ENCODE measurements at regions of chr10 and their contacts with region 1.

Region 1: GRCh38 chr10:6348096-6348874 is 145.6 kb downstream of the PFKFB3 start:
- DNase-seq: peak; percentile 94
- H3K4me3 Mint-ChIP-seq: peak overlapping the region; percentile 63
- H3K27ac Mint-ChIP-seq: peak overlapping the region; percentile 96
- H3K4me1 Mint-ChIP-seq: peaks cover 58% of the 10 kb centered on the region
- H3K27me3 Mint-ChIP-seq: no peaks in the 10 kb centered on the region

Region 2: GRCh38 chr10:6120691-6121090 is 227.6 kb before region 1 on chr10:
- CTCF ChIA-PET with region 1: no interaction called
- intact Hi-C with region 1: loop called (anchors 1 kb)
- DNase-seq: no peak
- H3K4me3 Mint-ChIP-seq: no peak overlapping the region
- H3K27ac Mint-ChIP-seq: no peak overlapping the region
- H3K4me1 Mint-ChIP-seq: peaks cover 31% of the 10 kb centered on the region
- H3K27me3 Mint-ChIP-seq: peaks cover 3% of the 10 kb centered on the region

Region 3: GRCh38 chr10:6239213-6239991 is 108.9 kb before region 1 on chr10:
- CTCF ChIA-PET with region 1: interaction called, 3 read pairs
- intact Hi-C with region 1: loop called (anchors 1 kb)
- DNase-seq: peak; percentile 90
- H3K4me3 Mint-ChIP-seq: no peak overlapping the region
- H3K27ac Mint-ChIP-seq: peak overlapping the region; percentile 60
- H3K4me1 Mint-ChIP-seq: peaks cover 23% of the 10 kb centered on the region
- H3K27me3 Mint-ChIP-seq: no peaks in the 10 kb centered on the region

Region 4: GRCh38 chr10:6269953-6270867 is 78.1 kb before region 1 on chr10:
- CTCF ChIA-PET with region 1: interaction called, 4 read pairs
- intact Hi-C with region 1: loop called (anchors 1 kb)
- DNase-seq: peak; percentile 90
- H3K4me3 Mint-ChIP-seq: peak overlapping the region; percentile 13
- H3K27ac Mint-ChIP-seq: peak overlapping the region; percentile 93
- H3K4me1 Mint-ChIP-seq: peaks cover 50% of the 10 kb centered on the region
- H3K27me3 Mint-ChIP-seq: no peaks in the 10 kb centered on the region

Region 5: DNA sequence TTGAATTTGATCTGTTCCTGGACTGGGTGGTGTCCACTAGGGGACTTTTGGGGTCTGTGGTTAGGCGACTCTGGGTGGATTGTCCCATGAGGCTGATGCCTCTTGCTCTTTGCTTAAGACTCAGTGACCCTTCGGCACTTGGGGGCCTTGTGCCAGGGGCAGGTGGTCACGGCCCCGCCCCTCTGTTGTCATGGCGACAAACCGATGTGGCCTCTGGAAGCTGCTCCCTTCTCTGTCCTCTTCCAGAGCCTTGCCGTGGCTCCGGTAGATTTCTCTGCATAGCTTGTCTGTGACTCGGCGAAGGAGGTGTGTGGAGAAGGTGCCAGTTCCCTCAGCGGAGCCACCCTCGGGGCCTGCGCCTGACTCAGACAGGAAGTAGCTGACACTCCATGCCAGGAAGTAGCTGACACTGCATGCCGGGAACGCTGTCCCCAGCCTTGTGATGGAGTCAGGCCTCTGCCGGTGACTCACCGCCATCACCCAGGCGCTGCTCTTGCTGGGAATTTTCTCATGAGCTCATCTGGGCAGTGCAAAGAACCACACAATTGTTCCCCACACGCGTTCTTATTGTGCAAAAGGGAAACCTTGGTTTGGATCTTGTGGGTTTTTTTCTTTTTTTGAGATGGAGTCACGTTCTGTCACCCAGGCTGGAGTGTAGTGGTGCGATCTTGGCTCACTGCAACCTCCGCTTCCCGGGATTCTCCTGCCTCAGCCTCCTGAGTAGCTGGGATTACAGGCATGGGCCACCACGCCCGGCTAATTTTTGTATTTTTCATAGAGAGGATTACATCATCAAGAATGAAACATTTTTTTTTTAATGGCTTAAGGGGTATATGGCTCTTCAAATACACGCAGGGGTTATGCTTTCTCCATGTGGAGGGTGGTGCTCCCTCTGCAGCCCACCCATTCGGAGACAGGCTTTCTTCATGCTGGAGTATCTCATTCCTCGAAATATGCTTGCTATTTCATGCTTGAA is 73.0 kb before region 1 on chr10:
- CTCF ChIA-PET with region 1: interaction called, 4 read pairs
- intact Hi-C with region 1: loop called (anchors 1 kb)
- DNase-seq: peak; percentile 98
- H3K4me3 Mint-ChIP-seq: peak overlapping the region; percentile 60
- H3K27ac Mint-ChIP-seq: peak overlapping the region; percentile 94
- H3K4me1 Mint-ChIP-seq: peaks cover 50% of the 10 kb centered on the region
- H3K27me3 Mint-ChIP-seq: no peaks in the 10 kb centered on the region

Region 6: DNA sequence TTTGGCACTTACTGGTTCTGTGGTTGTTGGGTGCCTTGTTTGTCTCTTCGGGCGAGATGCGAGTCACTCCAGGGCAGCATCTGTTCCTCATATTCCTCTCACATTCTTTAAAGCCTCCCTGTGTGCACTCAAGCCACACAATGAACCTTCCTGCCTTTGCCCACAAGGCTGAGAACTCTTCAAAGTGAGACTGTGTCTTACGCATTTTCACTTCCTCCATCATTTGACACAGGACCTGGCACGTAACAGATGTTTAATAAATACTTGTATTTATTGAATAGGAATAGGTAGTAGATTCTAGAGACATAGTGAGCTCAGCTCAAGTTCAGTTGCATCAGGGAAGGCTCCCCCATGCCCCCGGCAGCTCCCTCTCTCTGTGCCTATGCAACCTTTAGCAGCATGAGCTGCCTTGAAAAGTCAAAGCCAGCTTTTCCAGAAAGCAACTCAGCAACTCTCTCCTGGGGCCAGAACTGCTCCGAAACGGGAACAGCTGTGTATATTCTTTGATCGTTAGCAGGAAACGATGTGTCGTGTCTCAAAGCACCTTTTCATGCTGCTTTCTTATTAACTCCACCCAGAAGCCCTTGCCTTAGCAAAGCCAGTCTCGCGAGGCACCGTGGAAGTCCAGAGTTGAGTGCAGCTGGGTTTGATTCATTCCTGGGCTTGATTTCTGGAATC is 48.0 kb before region 1 on chr10:
- CTCF ChIA-PET with region 1: no interaction called
- intact Hi-C with region 1: loop called (anchors 1 kb)
- DNase-seq: peak; percentile 79
- H3K4me3 Mint-ChIP-seq: peak overlapping the region; percentile 35
- H3K27ac Mint-ChIP-seq: peak overlapping the region; percentile 91
- H3K4me1 Mint-ChIP-seq: peaks cover 51% of the 10 kb centered on the region
- H3K27me3 Mint-ChIP-seq: no peaks in the 10 kb centered on the region

Region 7: DNA sequence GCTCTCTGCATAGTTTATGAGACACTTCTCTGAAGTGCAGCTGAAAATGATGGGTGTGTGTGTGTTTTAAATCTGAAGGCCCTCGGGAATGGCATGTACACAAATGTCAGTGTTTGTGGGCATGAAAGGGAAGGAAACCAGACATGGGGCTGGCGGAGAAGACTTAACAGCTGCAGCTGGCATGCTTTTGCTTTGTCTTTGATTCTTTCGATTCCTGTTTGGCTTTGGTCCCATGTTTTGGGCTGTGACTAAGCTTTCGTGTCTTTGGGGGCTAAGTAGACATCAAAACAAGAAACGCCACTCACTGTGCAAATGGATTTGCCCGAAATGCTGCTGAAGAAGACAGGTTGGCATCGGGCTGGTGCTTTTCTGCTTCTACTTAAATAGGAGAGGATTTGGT is 33.8 kb after region 1 on chr10:
- CTCF ChIA-PET with region 1: interaction called, 3 read pairs
- intact Hi-C with region 1: loop called (anchors 1 kb)
- DNase-seq: peak; percentile 80
- H3K4me3 Mint-ChIP-seq: peak overlapping the region; percentile 38
- H3K27ac Mint-ChIP-seq: peak overlapping the region; percentile 70
- H3K4me1 Mint-ChIP-seq: peaks cover 27% of the 10 kb centered on the region
- H3K27me3 Mint-ChIP-seq: no peaks in the 10 kb centered on the region

Region 8: DNA sequence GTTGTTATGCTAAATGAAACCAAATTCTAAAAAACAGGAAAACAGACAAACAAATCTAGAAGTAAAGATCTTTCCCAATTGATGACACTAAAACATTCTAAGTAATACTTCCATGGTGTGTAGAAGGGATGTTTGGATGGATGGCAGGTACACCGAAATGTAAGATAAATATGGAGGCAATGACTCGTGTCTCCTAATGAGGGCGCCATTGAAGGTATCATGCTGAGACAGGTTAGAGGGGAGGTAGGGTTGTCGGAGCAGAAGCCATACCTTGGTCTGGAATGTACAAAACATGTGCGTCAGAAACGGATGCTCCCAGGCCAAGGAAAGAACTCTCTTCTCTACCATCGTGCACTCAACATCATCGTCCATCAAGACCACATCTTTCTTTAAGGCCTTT is 130.4 kb after region 1 on chr10:
- CTCF ChIA-PET with region 1: no interaction called
- intact Hi-C with region 1: no loop called
- DNase-seq: peak; percentile 24
- H3K4me3 Mint-ChIP-seq: no peak overlapping the region
- H3K27ac Mint-ChIP-seq: no peak overlapping the region
- H3K4me1 Mint-ChIP-seq: peaks cover 48% of the 10 kb centered on the region
- H3K27me3 Mint-ChIP-seq: no peaks in the 10 kb centered on the region

Measured in activated naive CD4-positive, alpha-beta T cell treated with anti-CD3 and anti-CD28 coated beads for 36 hours (primary cell).